Calu3 (cell line): ENCODE measurements at regions of chr17 and their contacts with region 1.

Region 1: DNA sequence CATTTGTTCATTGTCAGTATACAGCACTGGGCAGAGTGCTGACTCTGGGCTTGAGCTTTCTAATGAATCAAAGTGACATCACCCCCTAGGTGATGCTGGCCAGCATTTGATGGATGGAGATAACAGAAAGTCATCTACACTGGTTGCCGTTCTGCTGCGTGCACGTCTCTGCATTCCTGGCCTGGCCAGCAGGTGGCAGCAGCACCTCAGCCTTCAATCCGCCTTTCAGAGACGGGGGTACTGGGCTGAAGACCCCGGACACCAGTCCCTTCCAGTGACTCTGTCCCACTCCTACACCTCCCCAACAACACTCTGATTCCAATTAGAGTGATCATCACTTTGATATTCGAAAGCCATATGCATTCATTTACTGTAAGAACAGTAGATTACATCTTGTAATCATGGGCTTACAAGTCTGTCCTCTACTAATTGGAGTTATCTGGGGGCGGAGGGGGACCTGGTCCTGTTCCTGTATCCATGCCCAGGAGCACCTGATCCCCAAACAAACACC is 6.0 kb downstream of the CPSF4L start:
- DNase-seq: peak; percentile 56
- H3K4me3 Mint-ChIP-seq: no peak overlapping the region
- H3K27ac Mint-ChIP-seq: no peak overlapping the region
- H3K4me1 Mint-ChIP-seq: peaks cover 8% of the 10 kb centered on the region
- H3K27me3 Mint-ChIP-seq: peaks cover 15% of the 10 kb centered on the region
- CTCF ChIP-seq: peak; percentile 98

Region 2: GRCh38 chr17:73172252-73172651 is 83.5 kb before region 1 on chr17:
- CTCF ChIA-PET with region 1: no interaction called
- intact Hi-C with region 1: no loop called
- DNase-seq: no peak
- H3K4me3 Mint-ChIP-seq: no peak overlapping the region
- H3K27ac Mint-ChIP-seq: no peak overlapping the region
- H3K4me1 Mint-ChIP-seq: peaks cover 6% of the 10 kb centered on the region
- H3K27me3 Mint-ChIP-seq: peaks cover 12% of the 10 kb centered on the region
- CTCF ChIP-seq: no peak

Region 3: DNA sequence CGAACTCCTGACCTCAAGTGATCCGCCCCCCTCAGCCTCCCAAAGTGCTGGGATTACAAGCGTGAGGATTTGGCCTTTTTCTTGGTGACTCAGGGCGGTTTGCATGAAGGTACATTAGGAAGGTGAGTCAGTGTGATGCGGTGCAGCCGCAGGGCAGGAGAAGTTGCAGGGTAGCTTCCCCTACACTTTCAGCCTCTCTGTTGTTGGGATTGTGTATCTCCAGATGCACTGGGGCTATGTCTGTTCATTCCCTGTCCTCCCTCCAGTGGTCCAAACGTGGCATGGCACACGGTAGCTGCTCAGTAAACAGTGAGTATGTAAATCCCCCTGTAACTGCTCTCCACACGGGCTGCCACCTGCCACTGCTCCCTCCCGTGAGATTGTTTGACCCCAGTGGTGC is 165.2 kb after region 1 on chr17:
- CTCF ChIA-PET with region 1: no interaction called
- intact Hi-C with region 1: loop called (anchors 5 kb)
- DNase-seq: peak; percentile 25
- H3K4me3 Mint-ChIP-seq: no peak overlapping the region
- H3K27ac Mint-ChIP-seq: no peak overlapping the region
- H3K4me1 Mint-ChIP-seq: no peaks in the 10 kb centered on the region
- H3K27me3 Mint-ChIP-seq: peaks cover 32% of the 10 kb centered on the region
- CTCF ChIP-seq: peak; percentile 23